AG04449 (cell line): ENCODE measurements at regions of chr2 and their contacts with region 1.

Region 1: GRCh38 chr2:166180951-166181812 is 53.4 kb upstream of the SCN1A start:
- DNase-seq: no peak
- H3K4me3 ChIP-seq: no peak overlapping the region
- CTCF ChIP-seq: peak; percentile 51

Region 2: DNA sequence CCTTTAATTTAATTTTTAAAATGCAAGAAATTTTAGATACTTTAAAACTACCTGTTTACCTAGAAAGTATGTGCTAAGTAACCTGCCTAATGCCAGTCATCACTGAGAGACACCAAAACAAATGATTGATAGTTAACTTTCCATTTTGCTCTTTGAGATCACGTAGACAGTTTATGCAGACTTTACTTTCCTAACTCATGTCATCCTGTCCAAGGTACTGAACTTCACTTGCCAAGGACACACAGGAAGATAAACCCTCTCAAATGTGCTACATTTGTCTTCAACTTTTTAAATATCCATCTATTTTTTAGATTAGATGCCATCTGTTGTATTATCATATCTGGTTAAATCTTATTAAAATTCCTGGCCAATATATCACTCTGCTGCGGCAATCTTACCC is 33.3 kb before region 1 on chr2:
- CTCF ChIA-PET with region 1: no interaction called
- POLR2A ChIA-PET with region 1: no interaction called
- DNase-seq: no peak
- H3K4me3 ChIP-seq: no peak overlapping the region
- CTCF ChIP-seq: no peak

Region 3: DNA sequence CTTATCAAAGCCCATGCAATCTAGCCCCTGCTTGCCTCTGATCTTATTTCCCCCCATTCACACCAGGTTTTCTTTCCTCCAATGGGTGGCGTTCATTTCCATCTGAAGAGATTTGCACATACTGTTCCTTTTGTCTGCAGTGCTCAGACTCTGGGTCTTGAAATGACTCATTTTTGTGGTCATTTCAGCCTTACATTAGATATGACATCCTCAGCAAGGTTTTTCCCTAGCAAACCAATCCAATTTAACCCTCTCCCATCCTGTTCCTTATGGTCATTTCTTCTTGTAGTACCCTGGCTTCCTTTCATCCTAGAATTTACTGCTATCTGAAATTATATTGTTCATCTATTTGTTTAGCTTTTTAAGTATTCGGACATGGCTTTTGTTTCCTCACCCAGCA is 10.8 kb before region 1 on chr2:
- CTCF ChIA-PET with region 1: interaction called, 30 read pairs
- POLR2A ChIA-PET with region 1: no interaction called
- DNase-seq: no peak
- H3K4me3 ChIP-seq: no peak overlapping the region
- CTCF ChIP-seq: no peak

Region 4: DNA sequence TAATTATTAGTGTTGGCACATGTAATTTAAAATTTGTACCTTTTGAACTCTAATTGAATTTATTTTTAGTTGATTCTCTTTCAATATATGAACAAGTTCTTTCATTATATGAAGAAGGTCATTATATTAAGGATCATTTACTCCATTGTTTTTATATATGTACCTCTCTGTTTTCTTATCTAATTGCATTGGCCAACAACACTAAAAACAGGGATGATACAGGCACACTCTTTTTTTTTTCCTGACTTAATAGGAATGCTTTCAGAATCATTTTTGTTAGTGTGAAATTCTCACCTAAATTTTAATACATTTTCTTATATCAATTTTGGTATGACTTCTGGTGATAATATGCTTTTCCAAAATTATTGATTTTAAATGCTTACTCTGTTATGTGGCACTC is 21.6 kb after region 1 on chr2:
- CTCF ChIA-PET with region 1: interaction called, 14 read pairs
- POLR2A ChIA-PET with region 1: no interaction called
- DNase-seq: no peak
- H3K4me3 ChIP-seq: no peak overlapping the region
- CTCF ChIP-seq: no peak

Region 5: GRCh38 chr2:166314022-166314759 is 133.0 kb after region 1 on chr2:
- CTCF ChIA-PET with region 1: no interaction called
- POLR2A ChIA-PET with region 1: no interaction called
- DNase-seq: peak; percentile 67
- H3K4me3 ChIP-seq: no peak overlapping the region
- CTCF ChIP-seq: no peak

Region 6: GRCh38 chr2:166417669-166418068 is 236.5 kb after region 1 on chr2:
- CTCF ChIA-PET with region 1: interaction called, 143 read pairs
- POLR2A ChIA-PET with region 1: no interaction called
- DNase-seq: no peak
- H3K4me3 ChIP-seq: no peak overlapping the region
- CTCF ChIP-seq: no peak